ENCODE measurements at regions of chr2 and their contacts with region 1.

Region 1: GRCh38 chr2:191677646-191678436 is at the start of gene NABP1:
- DNase-seq: peak; percentile 98 to 99
- ATAC-seq: peak; percentile 85 to 97 (median 90)
- H3K4me3 ChIP-seq: peak within 1 kb of the TSS; percentile 63
- H3K4me3 Mint-ChIP-seq: peak within 1 kb of the TSS; percentile 98
- H3K27ac ChIP-seq: peak within 1 kb of the TSS; percentile 93
- H3K27ac Mint-ChIP-seq: peak within 1 kb of the TSS; percentile 99
- H3K4me1 ChIP-seq: peaks cover 35% of the 10 kb centered on the region
- H3K4me1 Mint-ChIP-seq: peaks cover 62 to 64% of the 10 kb centered on the region in 2 donors
- H3K27me3 ChIP-seq: no peaks in the 10 kb centered on the region
- H3K27me3 Mint-ChIP-seq: no peaks in the 10 kb centered on the region
- CTCF ChIP-seq: no peak
- total RNA-seq, gene NABP1: 44.5 to 52.2 (median 45.7) TPM

Region 2: GRCh38 chr2:191013932-191014652 is 663.7 kb before region 1 on chr2 and contains the start of gene STAT1:
- intact Hi-C with region 1: loop called (anchors 1 kb)
- DNase-seq: peak; percentile 97 to 99
- ATAC-seq: peak; percentile 86 to 97 (median 91)
- H3K4me3 ChIP-seq: peak within 1 kb of the TSS; percentile 73
- H3K4me3 Mint-ChIP-seq: no peak within 1 kb of the TSS
- H3K27ac ChIP-seq: peak within 1 kb of the TSS; percentile 97
- H3K27ac Mint-ChIP-seq: no peak within 1 kb of the TSS
- H3K4me1 ChIP-seq: peaks cover 39% of the 10 kb centered on the region
- H3K4me1 Mint-ChIP-seq: peaks cover 5 to 11% of the 10 kb centered on the region in 2 donors
- H3K27me3 ChIP-seq: no peaks in the 10 kb centered on the region
- H3K27me3 Mint-ChIP-seq: no peaks in the 10 kb centered on the region
- CTCF ChIP-seq: no peak
- total RNA-seq, gene STAT1: 49.1 to 91.6 (median 86.2) TPM

Region 3: DNA sequence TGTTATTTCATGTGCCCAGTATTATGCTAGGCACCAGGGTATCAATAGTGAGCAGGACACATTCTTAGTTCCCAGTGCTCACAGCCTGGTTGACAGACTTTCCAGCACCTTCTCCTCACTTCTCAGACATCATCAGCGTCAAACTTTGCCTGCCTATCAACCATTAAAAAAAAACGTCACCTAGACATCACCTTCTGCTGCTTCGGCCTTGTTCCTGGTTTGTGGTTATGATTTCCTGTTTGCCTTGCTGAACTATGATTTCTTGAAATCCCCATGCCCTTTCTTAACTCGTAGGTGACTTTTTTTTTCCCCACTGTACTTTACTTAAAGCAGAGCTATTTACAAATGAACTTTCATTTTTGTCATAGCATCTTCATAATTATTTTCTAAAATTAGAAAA is 60.3 kb before region 1 on chr2:
- intact Hi-C with region 1: loop called (anchors 2 kb)
- DNase-seq: peak in 1 of 2 donors; percentile 90
- ATAC-seq: peak; percentile 84 to 90 (median 88)
- H3K4me3 ChIP-seq: no peak overlapping the region
- H3K4me3 Mint-ChIP-seq: peak overlapping the region; percentile 38
- H3K27ac ChIP-seq: peak overlapping the region; percentile 62
- H3K27ac Mint-ChIP-seq: peak overlapping the region; percentile 75 to 90
- H3K4me1 ChIP-seq: peaks cover 12% of the 10 kb centered on the region
- H3K4me1 Mint-ChIP-seq: peaks cover 19 to 20% of the 10 kb centered on the region in 2 donors
- H3K27me3 ChIP-seq: no peaks in the 10 kb centered on the region
- H3K27me3 Mint-ChIP-seq: peaks cover 0 to 8% of the 10 kb centered on the region in 2 donors
- CTCF ChIP-seq: no peak

Region 4: DNA sequence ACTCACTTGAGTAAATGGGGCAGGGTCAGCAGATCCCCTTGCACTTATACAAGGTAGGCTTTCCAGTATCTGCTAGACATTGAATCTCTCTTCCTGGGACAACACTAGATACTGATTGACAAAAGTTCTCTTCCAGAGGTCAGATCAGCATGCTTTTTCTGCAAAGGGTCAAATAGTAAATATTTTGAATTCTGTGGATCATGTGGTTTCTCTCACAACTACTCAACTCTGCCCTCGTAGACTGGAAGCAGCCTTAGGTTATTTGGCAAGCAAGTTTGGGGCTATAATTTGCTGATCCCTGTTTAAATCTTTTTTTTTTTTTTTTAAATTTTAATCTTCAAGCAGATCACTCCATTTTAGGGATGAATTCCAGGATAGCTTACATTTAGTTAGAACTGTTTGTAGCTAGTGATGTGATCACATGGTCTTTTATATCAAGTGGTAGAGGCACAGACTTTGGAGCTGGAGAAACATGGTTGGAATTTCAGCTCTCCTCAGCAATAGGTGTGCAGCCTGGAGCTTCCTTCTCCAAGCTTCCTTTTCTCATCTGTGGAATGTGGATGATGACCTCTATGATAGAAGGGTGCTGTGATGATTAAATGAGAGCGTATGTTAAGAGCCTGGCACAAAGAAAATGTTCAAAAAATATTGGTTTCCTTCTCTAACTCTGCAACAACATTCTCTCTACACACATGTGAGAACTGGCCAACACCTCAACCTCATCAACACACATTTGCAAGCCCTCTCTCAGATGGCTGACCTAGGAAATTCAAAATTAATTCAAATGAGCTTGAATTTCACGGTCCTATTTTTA is 17.1 kb before region 1 on chr2:
- intact Hi-C with region 1: loop called (anchors 2 kb)
- DNase-seq: no peak
- ATAC-seq: peak; percentile 62 to 78 (median 62)
- H3K4me3 ChIP-seq: no peak overlapping the region
- H3K4me3 Mint-ChIP-seq: peak overlapping the region; percentile 21
- H3K27ac ChIP-seq: no peak overlapping the region
- H3K27ac Mint-ChIP-seq: peak overlapping the region; percentile 73 to 79
- H3K4me1 ChIP-seq: peaks cover 4% of the 10 kb centered on the region
- H3K4me1 Mint-ChIP-seq: peaks cover 14 to 15% of the 10 kb centered on the region in 2 donors
- H3K27me3 ChIP-seq: no peaks in the 10 kb centered on the region
- H3K27me3 Mint-ChIP-seq: no peaks in the 10 kb centered on the region
- CTCF ChIP-seq: no peak

Region 5: DNA sequence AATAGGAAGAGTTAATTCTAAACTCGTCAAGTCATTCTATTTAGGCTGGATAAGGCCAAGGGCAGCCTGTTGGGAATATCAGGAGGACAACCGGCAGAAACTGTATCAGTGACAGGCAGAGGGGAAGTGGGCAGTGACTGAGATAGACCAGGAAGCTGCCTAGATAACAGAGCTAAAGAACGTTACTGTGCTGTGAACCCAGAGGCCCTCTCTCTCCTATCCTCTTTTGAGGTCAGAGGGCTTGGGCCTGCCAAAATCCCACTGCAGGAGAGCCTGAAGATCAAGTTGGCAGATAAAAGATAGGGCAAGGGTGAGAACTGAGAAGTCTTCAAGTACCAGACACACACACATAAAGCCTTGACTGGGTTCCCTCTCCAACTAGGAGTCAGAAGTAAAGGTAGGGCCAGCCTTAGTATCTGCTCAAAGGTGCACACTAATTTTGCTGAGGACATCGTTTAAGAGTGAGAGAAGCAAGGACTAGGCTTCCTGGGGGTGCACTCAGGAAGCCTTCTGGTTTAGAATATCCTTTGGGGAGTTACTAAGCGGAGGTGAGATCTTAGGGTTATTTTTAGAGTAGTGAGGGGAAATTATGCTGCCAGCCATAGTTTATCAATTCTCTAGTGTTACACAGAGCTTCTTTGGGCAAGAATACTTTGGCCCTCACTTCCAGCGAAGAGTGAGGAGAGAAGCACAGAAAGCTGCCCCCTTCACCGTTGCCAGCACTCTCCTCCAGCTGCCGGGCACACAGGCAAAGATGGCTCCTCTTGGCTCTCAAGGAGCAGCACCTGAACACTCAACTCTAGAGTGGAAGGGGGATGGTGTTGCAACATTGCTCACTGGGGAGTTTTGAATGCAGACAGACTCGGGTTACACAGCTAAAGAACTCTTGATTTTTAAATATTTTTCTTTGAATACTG is 159.3 kb after region 1 on chr2:
- intact Hi-C with region 1: no loop called
- DNase-seq: no peak
- ATAC-seq: no peak
- H3K4me3 ChIP-seq: no peak overlapping the region
- H3K4me3 Mint-ChIP-seq: no peak overlapping the region
- H3K27ac ChIP-seq: no peak overlapping the region
- H3K27ac Mint-ChIP-seq: peak overlapping the region in 1 of 2 donors; percentile 47
- H3K4me1 ChIP-seq: peaks cover 10% of the 10 kb centered on the region
- H3K4me1 Mint-ChIP-seq: peaks cover 9 to 11% of the 10 kb centered on the region in 2 donors
- H3K27me3 ChIP-seq: no peaks in the 10 kb centered on the region
- H3K27me3 Mint-ChIP-seq: peaks cover 0 to 2% of the 10 kb centered on the region in 2 donors
- CTCF ChIP-seq: no peak

Region 6: DNA sequence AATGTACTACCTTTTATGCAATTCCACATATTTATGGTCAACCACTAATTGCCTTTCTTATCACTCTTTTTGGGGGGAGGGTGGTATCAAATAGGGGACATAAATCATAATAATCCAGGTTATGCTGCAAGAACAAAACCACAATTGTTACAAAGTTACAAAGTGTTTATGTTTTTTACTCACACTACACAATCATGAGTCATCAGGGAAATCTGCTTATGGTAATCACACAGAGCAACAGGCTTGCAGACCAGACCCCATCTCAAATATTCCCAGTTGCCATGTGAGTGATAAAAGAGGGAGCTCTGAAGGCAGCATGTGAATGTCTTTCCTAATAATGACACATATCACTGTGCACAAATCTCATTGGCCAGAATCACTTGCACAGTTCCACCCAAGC is 821.6 kb after region 1 on chr2:
- intact Hi-C with region 1: no loop called
- DNase-seq: no peak
- ATAC-seq: no peak
- H3K4me3 ChIP-seq: no peak overlapping the region
- H3K4me3 Mint-ChIP-seq: no peak overlapping the region
- H3K27ac ChIP-seq: no peak overlapping the region
- H3K27ac Mint-ChIP-seq: no peak overlapping the region
- H3K4me1 ChIP-seq: no peaks in the 10 kb centered on the region
- H3K4me1 Mint-ChIP-seq: no peaks in the 10 kb centered on the region
- H3K27me3 ChIP-seq: no peaks in the 10 kb centered on the region
- H3K27me3 Mint-ChIP-seq: no peaks in the 10 kb centered on the region
- CTCF ChIP-seq: no peak